ENCODE measurements at regions of chr9 and their contacts with region 1.

Region 1: GRCh38 chr9:34701769-34702736 is 7.9 kb downstream of the CCL21 start:
- DNase-seq: peak; percentile 87 to 90
- H3K4me3 ChIP-seq: peak overlapping the region; percentile 37 to 68
- H3K27ac ChIP-seq: peak overlapping the region; percentile 78 to 94
- H3K4me1 ChIP-seq: no peaks in the 10 kb centered on the region
- H3K27me3 ChIP-seq: no peaks in the 10 kb centered on the region
- CTCF ChIP-seq: peak; percentile 93 to 99 (median 97)
- POLR2A ChIP-seq: no peak

Region 2: DNA sequence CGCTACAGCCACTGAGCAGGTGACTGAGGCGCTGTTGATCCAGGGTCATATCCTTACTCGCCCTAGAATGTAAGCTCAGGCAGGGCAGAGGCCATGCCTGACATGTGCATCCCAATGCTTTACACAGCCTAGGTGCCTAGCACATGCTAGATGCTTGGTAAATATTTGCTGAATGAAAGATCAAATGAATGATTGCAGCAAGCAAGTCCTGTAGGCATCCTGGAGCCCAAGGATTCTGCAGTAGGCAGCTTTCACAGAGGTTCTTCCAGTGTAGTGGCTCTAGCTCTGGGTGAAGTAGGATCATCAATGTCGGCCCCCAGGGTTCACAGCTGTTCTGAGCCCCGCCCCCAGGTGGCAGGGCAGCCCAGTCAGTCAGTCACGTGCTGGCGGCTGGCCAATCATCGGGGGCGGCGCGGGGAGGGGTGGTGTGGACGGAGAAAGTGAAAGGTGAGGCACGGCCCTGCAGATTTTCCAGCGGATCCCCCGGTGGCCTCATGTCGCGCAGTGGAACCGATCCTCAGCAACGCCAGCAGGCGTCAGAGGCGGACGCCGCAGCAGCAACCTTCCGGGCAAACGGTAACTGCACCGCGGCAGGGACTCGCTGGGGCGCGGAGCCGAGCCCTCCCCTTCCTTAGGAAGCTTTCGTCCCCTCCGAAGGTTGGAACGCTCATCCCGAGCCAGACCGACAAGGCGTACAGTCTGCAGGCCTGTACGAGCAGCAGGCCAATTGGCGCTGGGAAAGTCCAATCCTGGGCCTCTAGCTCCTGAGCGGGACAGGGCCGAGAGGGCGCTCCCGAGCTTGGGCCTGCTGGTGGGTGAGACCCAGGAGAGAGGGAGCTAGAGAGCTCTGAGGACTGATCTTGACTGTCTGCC is 55.6 kb before region 1 on chr9 and contains the start of gene GALT:
- intact Hi-C with region 1: loop called (anchors 10 kb)
- DNase-seq: peak; percentile 93 to 94
- H3K4me3 ChIP-seq: peak within 1 kb of the TSS; percentile 75 to 84
- H3K27ac ChIP-seq: peak within 1 kb of the TSS; percentile 84 to 88
- H3K4me1 ChIP-seq: peaks cover 0 to 7% of the 10 kb centered on the region in 2 donors
- H3K27me3 ChIP-seq: no peaks in the 10 kb centered on the region
- CTCF ChIP-seq: peak; percentile 29 to 68 (median 52)
- POLR2A ChIP-seq: peak; percentile 47 to 50
- total RNA-seq, gene GALT: 4.4 to 82.9 (median 50.7) TPM

Region 3: GRCh38 chr9:35716230-35716629 is 1014.2 kb after region 1 on chr9:
- intact Hi-C with region 1: no loop called
- DNase-seq: no peak
- H3K4me3 ChIP-seq: no peak overlapping the region
- H3K27ac ChIP-seq: no peak overlapping the region
- H3K4me1 ChIP-seq: no peaks in the 10 kb centered on the region
- H3K27me3 ChIP-seq: no peaks in the 10 kb centered on the region
- CTCF ChIP-seq: no peak
- POLR2A ChIP-seq: no peak

Measured in uterus (tissue), 4 donors.